Activated naive CD4-positive, alpha-beta T cell treated with anti-CD3 and anti-CD28 coated beads for 36 hours (primary cell): ENCODE measurements at regions of chr22 and their contacts with region 1.

Region 1: DNA sequence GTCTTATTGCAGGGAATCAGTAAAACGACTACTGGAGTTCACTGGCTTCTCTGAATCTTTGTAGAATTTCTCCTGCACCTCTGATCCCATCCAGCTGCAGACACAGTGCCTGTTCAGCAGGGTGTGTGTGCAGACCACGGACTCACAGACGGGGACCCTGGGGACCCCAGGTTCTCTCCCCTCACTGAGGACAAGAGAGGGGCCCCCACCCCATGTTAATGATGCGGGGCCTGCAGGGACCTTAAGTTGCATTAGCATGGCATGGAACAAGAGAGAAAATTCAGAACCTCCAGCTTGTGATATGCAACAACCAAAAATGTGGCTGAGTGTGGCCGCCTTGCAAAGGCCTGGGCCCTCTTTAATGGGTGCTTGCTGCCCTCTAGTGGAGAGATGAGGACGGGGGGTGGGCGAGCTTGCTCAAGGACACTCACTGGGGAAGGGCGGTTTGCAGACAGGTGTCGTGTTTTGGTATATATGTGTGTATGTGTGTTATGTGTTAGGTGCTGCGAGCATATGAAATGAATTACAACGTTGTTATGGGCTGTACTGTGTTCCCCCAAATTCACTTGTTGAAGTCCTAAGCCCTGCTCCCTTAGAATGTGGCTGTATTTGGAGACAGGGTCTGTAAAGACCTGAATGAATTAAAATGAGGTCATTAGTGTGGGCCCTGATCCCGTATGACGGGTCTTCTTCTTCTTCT is 84.4 kb upstream of the SEPTIN5 start:
- DNase-seq: peak; percentile 94
- H3K4me3 Mint-ChIP-seq: no peak overlapping the region
- H3K27ac Mint-ChIP-seq: no peak overlapping the region
- H3K4me1 Mint-ChIP-seq: peaks cover 3% of the 10 kb centered on the region
- H3K27me3 Mint-ChIP-seq: no peaks in the 10 kb centered on the region

Region 2: DNA sequence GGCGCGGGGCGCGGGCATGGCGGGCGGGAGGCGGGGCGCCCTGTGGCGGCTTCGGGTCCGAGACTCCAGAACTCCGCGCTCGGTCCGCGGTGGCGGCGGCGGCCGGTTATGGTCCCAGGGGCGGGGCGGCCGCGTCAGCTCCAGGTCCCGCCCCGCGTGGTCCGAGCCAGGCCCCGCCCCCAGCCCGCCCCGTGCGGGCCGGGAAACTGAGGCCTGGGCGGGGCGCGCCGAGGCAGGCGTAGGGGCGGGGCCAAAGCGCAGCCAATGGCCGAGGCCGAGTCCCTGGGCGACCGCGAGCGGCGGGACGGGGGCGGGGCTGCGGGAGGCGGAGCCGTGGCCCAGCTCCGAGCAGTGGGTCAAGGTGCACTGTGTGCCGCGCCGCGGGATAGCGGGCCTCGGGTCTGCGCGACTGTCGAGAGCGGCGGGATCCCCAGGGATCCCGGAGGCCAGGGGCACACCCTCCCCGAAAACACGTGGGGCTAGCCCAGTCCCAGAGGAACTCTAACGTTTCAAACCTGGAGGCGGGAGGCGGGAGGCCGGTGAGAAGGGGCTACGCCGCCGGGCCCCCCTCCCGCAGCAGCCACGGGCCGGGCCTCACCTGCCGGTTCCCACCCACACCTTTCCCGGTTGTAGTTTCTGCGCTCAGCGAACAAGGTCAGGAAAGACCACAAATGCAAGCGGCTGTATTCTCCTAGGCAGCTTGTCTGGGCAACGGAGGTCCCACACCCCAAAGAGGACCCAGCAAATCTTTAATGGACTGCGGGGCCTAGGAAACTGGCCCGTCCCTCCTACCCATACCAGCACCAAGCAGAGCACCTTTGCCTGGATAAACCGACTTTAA is 451.0 kb before region 1 on chr22 and contains the start of gene SLC25A1:
- CTCF ChIA-PET with region 1: interaction called, 5 read pairs
- intact Hi-C with region 1: loop called (anchors 1 kb)
- DNase-seq: peak; percentile 85
- H3K4me3 Mint-ChIP-seq: peak within 1 kb of the TSS; percentile 75
- H3K27ac Mint-ChIP-seq: peak within 1 kb of the TSS; percentile 53
- H3K4me1 Mint-ChIP-seq: peaks cover 31% of the 10 kb centered on the region
- H3K27me3 Mint-ChIP-seq: no peaks in the 10 kb centered on the region
- total RNA-seq, gene SLC25A1: 54.0 to 58.4 TPM

Region 3: DNA sequence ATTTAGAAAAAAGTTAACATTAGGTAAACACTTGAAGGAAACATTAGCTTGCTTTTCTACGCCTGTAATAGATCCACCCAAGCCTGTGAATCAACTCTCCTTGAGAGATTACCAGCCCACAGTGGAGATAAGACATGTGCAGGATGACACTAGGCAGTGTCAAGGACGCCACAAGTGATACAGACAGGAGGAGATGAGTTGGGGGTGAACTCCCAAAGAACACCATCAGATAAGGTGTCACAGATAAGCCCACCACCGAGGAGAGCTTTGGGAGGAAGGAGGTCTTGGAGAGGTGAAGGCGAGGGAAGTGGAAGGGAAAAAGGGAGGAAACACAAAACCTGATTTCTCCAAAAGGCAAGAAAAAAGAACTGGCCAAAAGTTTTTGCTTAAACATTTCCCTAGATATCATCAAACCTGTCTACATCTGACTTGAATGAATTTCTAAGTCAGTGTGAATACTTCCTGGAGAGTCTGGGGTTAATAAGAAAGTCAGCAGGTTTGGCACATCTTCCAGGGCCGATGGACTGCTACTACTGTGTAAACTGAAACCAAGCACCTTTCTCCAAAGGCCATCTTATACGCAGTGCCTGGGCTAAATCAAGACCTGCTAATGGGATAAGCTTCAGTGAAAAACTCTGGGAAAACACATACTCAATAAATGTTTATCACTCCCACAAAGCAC is 353.8 kb before region 1 on chr22:
- CTCF ChIA-PET with region 1: no interaction called
- intact Hi-C with region 1: no loop called
- DNase-seq: no peak
- H3K4me3 Mint-ChIP-seq: no peak overlapping the region
- H3K27ac Mint-ChIP-seq: no peak overlapping the region
- H3K4me1 Mint-ChIP-seq: no peaks in the 10 kb centered on the region
- H3K27me3 Mint-ChIP-seq: no peaks in the 10 kb centered on the region

Region 4: DNA sequence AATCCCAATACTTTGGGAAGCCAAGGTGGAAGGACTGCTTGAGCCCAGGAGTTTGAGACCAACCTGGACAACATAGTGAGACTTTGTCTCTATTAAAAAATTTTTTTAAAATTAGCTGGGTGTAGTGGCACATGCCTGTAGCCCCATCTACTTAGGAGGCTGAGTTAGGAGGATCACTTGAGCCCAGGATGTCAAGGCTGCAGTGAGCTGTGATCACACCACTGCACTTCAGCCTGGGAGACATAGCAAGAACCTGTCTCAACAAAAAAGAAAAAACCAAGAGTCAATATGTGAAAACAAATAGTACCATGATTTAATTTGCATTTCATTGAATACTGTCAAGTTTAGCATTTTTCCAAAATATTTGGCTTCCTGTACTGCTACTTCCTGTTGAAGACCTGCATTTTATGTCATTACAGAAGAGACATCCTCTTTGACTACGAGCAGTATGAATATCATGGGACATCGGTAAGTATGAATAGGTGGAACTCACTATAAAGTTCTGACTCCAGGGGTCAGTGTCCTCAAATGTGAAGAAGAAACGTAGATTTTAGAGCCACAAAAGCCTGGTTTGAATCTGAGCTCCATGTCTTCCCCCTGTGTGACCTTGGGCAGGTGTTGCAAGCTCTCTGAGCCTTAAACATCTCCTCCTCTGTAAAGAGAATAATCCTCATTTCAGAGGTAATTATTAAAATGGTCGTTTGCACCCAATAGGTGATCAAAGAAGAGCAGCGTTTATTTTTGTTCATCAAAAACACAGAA is 134.1 kb before region 1 on chr22:
- CTCF ChIA-PET with region 1: interaction called, 3 read pairs
- intact Hi-C with region 1: loop called (anchors 5 kb)
- DNase-seq: no peak
- H3K4me3 Mint-ChIP-seq: no peak overlapping the region
- H3K27ac Mint-ChIP-seq: no peak overlapping the region
- H3K4me1 Mint-ChIP-seq: peaks cover 12% of the 10 kb centered on the region
- H3K27me3 Mint-ChIP-seq: no peaks in the 10 kb centered on the region

Region 5: DNA sequence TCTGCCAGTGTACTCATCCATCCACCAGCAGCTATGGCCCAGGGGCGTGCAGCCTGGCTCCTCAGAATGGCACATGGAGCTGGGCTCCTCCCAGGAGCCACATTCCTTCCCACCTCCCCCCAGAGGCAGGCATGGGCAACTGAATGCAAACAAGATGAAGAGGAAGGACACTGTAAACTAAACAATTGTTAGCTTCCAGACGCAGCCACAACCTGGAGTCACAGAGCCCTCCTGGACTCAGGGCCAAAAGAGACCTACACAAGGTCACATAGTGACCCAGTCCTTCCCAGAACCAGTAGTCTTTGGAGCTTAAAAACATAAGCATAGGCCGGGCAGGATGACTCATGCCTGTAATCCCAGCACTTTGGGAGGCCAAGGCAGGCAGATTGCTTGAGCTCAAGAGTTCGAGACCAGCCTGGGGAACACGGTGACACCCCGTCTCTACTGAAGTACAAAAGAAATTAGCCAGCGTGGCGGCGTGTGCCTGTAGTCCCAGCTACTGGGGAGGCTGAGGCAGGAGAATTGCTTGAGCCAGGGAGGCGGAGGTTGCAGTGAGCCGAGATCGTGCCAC is 75.0 kb before region 1 on chr22:
- CTCF ChIA-PET with region 1: no interaction called
- intact Hi-C with region 1: no loop called
- DNase-seq: no peak
- H3K4me3 Mint-ChIP-seq: no peak overlapping the region
- H3K27ac Mint-ChIP-seq: no peak overlapping the region
- H3K4me1 Mint-ChIP-seq: no peaks in the 10 kb centered on the region
- H3K27me3 Mint-ChIP-seq: no peaks in the 10 kb centered on the region

Region 6: DNA sequence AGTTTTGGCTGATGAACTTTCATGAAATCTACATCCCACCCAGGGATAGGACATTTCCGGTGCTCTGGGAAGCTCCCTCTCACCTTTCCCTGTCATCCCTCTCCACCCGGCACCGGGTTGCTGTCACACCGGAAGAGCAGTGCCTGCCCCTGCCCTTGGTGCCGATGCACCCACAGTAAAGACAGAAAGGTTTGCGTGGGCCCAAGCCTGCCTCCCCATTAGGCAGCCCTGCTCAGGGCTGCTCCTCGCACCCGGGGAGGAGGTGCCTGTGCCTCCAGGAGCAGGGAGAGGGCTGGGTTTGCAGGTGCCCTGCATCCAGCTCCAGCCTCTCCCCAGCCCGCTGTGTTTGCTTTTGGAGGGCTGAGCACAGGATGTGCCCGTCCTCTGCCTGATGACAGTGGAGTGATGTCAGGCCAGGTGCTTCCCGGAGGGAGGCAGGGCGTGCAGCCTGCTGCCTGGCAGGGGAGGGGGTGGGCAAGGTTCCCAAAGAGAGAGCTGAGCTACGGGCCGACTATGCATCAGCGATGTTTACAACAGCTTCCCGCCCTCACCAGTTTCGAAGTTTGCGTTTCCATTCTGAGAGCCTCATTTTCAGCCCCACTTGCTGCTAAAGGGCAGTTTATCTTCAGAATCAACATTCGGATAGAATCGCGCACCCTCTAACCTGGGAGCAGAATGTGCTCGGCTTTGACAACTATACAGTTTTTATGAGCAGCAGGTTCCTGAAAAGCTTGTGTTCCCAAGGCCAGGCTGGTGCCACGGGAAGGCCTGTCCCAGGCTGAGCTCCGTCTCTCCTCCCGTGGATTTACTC is 22.5 kb before region 1 on chr22:
- CTCF ChIA-PET with region 1: no interaction called
- intact Hi-C with region 1: loop called (anchors 2 kb)
- DNase-seq: peak; percentile 94
- H3K4me3 Mint-ChIP-seq: peak overlapping the region; percentile 57
- H3K27ac Mint-ChIP-seq: peak overlapping the region; percentile 76
- H3K4me1 Mint-ChIP-seq: peaks cover 62% of the 10 kb centered on the region
- H3K27me3 Mint-ChIP-seq: no peaks in the 10 kb centered on the region